Kidney (tissue), 22 donors: ENCODE measurements at regions of chr20 and their contacts with region 1.

Region 1: GRCh38 chr20:63537525-63538203 is 488 bp upstream of the PTK6 start:
- DNase-seq: peak; percentile 86 to 98 (median 92)
- H3K4me3 ChIP-seq: peak overlapping the region in 2 of 3 donors; percentile 29 to 46
- H3K27ac ChIP-seq: peak overlapping the region in 1 of 2 donors; percentile 22
- H3K4me1 ChIP-seq: peaks cover 0 to 4% (median 0%) of the 10 kb centered on the region in 3 donors
- H3K27me3 ChIP-seq: no peaks in the 10 kb centered on the region
- CTCF ChIP-seq: peak; percentile 96

Region 2: DNA sequence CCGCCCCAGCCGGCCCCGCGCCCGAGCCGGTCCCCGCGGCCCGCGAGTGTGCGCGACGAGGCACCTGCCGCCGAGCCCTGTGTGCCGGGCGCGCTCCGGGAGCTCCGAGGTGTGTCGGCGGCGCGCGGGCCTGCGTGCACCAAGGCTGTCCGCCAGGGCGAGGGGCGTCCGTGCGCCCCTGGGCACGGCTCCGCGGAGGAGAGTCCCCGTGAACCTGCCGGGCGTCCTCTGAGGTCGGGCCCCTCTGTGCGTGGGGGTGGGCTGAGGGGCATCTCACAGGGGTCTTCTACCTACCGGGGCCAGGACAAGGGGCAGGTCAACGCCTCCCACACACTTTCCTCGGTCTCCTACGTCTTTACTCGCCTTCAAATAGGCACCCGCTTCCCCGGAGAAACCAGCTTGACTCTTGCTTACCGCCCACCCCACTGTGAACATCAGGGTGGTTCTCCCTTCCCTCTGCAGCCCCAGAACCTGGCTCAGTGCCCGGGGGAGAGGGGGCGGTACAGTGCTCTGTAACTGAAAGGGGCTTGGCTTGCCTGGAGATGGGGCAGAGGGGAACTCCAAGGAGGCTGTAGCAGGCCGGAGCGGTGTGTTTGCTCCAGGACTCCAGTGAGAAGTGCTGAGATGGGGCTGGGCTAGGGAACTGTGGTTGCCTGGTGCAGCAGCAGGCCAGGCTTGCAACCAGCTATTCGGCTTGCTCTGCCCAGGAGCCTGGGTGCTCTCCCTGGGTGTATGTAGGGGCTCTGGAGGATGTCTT is 442.1 kb after region 1 on chr20 and contains the start of gene SAMD10:
- intact Hi-C with region 1: loop called (anchors 5 kb)
- DNase-seq: peak; percentile 65 to 88 (median 83)
- H3K4me3 ChIP-seq: peak within 1 kb of the TSS; percentile 32 to 98 (median 91)
- H3K27ac ChIP-seq: peak within 1 kb of the TSS; percentile 54 to 74
- H3K4me1 ChIP-seq: peaks cover 3 to 22% (median 7%) of the 10 kb centered on the region in 3 donors
- H3K27me3 ChIP-seq: no peaks in the 10 kb centered on the region
- CTCF ChIP-seq: no peak
- total RNA-seq, gene SAMD10: 7.9 TPM